ENCODE measurements at regions of chr19 and their contacts with region 1.

Region 1: GRCh38 chr19:46076951-46077816 is 36.4 kb upstream of the IGFL4 start:
- DNase-seq: peak; percentile 68
- H3K4me3 Mint-ChIP-seq: peak overlapping the region; percentile 14
- H3K27ac Mint-ChIP-seq: no peak overlapping the region
- H3K4me1 Mint-ChIP-seq: peaks cover 11% of the 10 kb centered on the region
- H3K27me3 Mint-ChIP-seq: peaks cover 68% of the 10 kb centered on the region

Region 2: GRCh38 chr19:45848922-45849321 is 228.3 kb before region 1 on chr19:
- CTCF ChIA-PET with region 1: no interaction called
- intact Hi-C with region 1: no loop called
- DNase-seq: no peak
- H3K4me3 Mint-ChIP-seq: no peak overlapping the region
- H3K27ac Mint-ChIP-seq: no peak overlapping the region
- H3K4me1 Mint-ChIP-seq: no peaks in the 10 kb centered on the region
- H3K27me3 Mint-ChIP-seq: no peaks in the 10 kb centered on the region

Region 3: GRCh38 chr19:45895519-45895972 is 181.6 kb before region 1 on chr19:
- CTCF ChIA-PET with region 1: no interaction called
- intact Hi-C with region 1: no loop called
- DNase-seq: no peak
- H3K4me3 Mint-ChIP-seq: no peak overlapping the region
- H3K27ac Mint-ChIP-seq: no peak overlapping the region
- H3K4me1 Mint-ChIP-seq: peaks cover 3% of the 10 kb centered on the region
- H3K27me3 Mint-ChIP-seq: no peaks in the 10 kb centered on the region

Region 4: DNA sequence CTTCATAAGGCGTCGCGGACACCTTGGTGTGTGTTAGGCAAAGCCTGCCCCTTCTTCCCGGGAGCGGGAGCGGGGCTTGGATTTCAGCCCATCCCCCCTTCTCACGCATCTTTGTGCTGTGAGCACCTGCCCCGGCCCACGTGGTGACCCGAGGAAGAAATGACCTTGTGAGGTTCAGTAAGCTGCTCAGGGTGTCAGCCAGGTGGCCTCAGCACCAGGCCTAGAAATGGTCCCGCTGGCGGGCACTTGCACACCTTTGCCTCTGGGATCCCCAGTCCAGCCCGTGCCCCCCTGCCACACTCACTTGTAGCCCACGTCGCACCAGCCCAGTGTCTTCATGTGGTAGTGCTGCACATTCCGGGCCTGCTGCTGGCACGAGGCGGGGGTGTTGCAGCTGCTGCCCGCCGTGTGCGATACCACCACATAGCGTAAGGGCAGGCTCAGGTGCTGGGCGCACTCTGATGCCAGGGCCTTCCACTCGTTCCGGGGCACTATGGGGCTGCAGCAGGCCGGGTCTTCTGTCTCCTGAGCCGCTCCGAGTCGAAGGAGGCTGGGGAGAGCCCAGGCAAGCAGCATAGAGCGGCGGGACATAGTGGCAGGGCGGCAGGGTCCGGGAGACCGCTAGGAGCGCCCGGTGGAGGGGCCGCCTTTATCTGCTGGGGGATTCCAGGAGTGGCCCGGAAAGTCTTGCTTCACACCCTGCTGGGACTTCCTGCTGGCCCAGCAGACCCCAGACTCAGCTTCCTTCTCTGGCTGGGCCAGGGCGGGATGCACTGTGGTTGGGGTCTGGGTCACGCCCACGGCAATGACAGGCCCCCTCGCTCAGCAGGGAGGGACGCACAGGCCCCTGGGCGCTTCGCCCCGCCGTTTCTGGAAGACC is 54.5 kb before region 1 on chr19 and contains the start of gene PGLYRP1:
- CTCF ChIA-PET with region 1: interaction called, 38 read pairs
- intact Hi-C with region 1: no loop called
- DNase-seq: no peak
- H3K4me3 Mint-ChIP-seq: no peak within 1 kb of the TSS
- H3K27ac Mint-ChIP-seq: no peak within 1 kb of the TSS
- H3K4me1 Mint-ChIP-seq: peaks cover 9% of the 10 kb centered on the region
- H3K27me3 Mint-ChIP-seq: peaks cover 12% of the 10 kb centered on the region
- total RNA-seq, gene PGLYRP1: not detected

Region 5: DNA sequence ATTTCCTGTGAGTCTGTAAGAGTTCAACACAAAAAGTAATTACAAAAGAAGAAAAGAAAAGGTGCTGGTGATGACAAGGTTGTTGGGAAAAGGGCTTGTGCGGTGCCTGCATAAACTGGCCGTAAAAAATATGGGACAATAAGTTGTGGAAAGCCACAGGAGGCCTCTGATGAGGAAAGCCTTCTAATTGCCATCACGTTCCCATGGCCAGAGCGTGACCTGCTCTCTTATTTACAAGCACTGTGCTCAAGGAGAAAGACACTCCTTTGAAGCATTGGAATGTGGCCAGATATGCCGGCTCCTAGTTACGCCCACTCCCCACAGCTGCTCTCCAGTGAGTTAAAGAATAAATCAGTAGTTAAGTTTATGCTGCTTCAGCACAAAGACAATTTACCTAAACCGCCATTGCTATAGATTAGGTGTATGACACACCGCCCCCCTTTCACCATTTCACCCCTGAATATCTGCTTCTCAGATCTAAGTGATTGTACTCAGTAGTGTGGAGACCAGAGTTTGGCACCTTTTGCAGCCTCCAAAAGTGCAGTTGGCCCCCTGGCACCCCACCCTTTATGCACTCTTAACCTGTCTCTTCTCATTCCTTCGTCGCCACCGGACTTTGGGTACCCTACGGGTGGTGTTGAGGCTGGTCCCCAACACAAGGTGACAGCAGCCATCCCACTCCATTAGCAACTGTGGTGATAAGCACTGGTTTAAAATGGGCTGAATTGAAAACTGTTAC is 46.2 kb before region 1 on chr19:
- CTCF ChIA-PET with region 1: interaction called, 38 read pairs
- intact Hi-C with region 1: loop called (anchors 1 kb)
- DNase-seq: no peak
- H3K4me3 Mint-ChIP-seq: no peak overlapping the region
- H3K27ac Mint-ChIP-seq: no peak overlapping the region
- H3K4me1 Mint-ChIP-seq: peaks cover 9% of the 10 kb centered on the region
- H3K27me3 Mint-ChIP-seq: peaks cover 3% of the 10 kb centered on the region

Region 6: DNA sequence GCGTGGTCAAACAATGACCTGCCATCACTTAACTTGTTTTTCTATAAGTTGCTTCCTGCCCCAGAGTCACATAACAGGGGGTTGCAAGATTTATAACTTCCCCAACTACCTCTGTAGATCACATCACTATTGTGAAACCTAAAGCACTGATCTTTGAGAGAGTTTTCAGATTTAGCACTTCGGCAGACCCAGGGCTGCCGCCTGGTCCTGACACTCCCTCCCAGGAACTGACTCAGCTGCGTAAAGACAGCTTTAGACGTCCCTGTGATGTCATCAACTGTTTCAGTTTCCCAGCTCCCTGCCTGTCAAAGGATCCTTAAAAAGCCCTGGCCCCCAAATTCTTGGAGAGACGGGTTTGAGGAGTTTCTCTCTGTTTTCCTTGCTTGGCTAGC is 104.2 kb after region 1 on chr19:
- CTCF ChIA-PET with region 1: interaction called, 16 read pairs
- intact Hi-C with region 1: loop called (anchors 1 kb)
- DNase-seq: peak; percentile 72
- H3K4me3 Mint-ChIP-seq: no peak overlapping the region
- H3K27ac Mint-ChIP-seq: peak overlapping the region; percentile 79
- H3K4me1 Mint-ChIP-seq: peaks cover 42% of the 10 kb centered on the region
- H3K27me3 Mint-ChIP-seq: peaks cover 21% of the 10 kb centered on the region

Region 7: DNA sequence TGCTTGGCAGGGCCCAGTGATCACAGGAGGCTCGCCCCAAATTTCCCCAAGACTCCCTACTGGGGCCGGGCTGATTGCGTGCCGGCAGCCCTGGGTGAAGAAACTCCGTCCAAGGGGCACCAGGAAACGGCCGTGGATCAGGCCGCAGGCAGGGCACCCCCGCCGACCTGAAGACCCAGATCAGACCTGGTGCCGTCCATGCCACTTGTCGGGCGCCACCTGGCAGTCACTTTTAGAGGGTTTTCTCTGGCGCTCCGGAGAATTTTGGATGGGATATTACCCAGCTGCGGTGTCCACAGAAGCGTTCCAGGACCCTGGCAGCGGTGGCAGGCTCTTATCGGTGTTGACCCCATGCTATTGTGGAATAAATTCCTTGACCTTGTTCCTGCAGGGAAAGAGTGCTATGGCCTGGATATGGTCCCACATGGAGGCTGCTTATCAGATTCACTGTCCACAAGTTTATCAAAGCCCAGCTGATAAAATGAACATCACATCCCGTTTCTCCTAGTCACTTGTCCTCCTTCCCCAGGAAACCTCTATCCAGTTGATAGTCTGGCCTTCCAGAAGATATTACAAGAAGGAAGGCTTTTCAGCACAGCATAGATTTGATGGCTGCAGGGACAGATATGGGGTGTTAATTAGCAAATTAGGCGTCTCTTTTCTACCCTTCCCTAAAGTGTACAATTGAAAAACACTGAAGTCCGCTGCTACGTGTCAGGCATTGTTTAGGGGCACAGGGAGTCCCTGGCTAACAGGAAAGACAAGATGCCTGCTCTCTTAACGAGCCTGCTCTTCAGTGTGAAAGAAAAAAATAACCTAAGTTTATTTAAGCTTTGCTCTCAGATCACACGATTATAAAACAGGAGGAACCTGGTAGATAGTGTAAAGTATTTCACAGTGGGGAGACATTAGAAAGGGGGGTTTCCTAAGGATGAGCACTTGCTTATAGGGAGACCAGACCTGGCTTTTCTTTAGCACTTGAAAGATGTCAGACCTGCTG is 109.2 kb after region 1 on chr19:
- CTCF ChIA-PET with region 1: interaction called, 20 read pairs
- intact Hi-C with region 1: loop called (anchors 1 kb)
- DNase-seq: no peak
- H3K4me3 Mint-ChIP-seq: no peak overlapping the region
- H3K27ac Mint-ChIP-seq: peak overlapping the region; percentile 93
- H3K4me1 Mint-ChIP-seq: peaks cover 35% of the 10 kb centered on the region
- H3K27me3 Mint-ChIP-seq: peaks cover 38% of the 10 kb centered on the region

Region 8: GRCh38 chr19:46192992-46193650 is 115.9 kb after region 1 on chr19:
- CTCF ChIA-PET with region 1: interaction called, 20 read pairs
- intact Hi-C with region 1: loop called (anchors 1 kb)
- DNase-seq: no peak
- H3K4me3 Mint-ChIP-seq: no peak overlapping the region
- H3K27ac Mint-ChIP-seq: no peak overlapping the region
- H3K4me1 Mint-ChIP-seq: no peaks in the 10 kb centered on the region
- H3K27me3 Mint-ChIP-seq: peaks cover 51% of the 10 kb centered on the region